Activated B cell treated with CpG ODN at 0.5 μM for 24 hours (primary cell): ENCODE measurements at regions of chr3 and their contacts with region 1.

Region 1: GRCh38 chr3:186985661-186986364 is 55.5 kb downstream of the ST6GAL1 start:
- DNase-seq: no peak
- ATAC-seq: peak; percentile 82
- H3K4me3 Mint-ChIP-seq: peak overlapping the region; percentile 39
- H3K27ac Mint-ChIP-seq: peak overlapping the region; percentile 97
- H3K4me1 Mint-ChIP-seq: peaks cover 91% of the 10 kb centered on the region
- H3K27me3 Mint-ChIP-seq: no peaks in the 10 kb centered on the region
- CTCF ChIP-seq: no peak

Region 2: GRCh38 chr3:186959029-186959624 is 26.7 kb before region 1 on chr3:
- CTCF ChIA-PET with region 1: interaction called, 4 read pairs
- POLR2A ChIA-PET with region 1: interaction called, 10 read pairs
- intact Hi-C with region 1: loop called (anchors 2 kb)
- DNase-seq: no peak
- ATAC-seq: peak; percentile 75
- H3K4me3 Mint-ChIP-seq: peak overlapping the region; percentile 45
- H3K27ac Mint-ChIP-seq: peak overlapping the region; percentile 75
- H3K4me1 Mint-ChIP-seq: peaks cover 82% of the 10 kb centered on the region
- H3K27me3 Mint-ChIP-seq: no peaks in the 10 kb centered on the region
- CTCF ChIP-seq: no peak

Region 3: GRCh38 chr3:186971578-186971977 is 14.2 kb before region 1 on chr3:
- CTCF ChIA-PET with region 1: no interaction called
- POLR2A ChIA-PET with region 1: interaction called, 5 read pairs
- intact Hi-C with region 1: loop called (anchors 2 kb)
- DNase-seq: no peak
- ATAC-seq: no peak
- H3K4me3 Mint-ChIP-seq: no peak overlapping the region
- H3K27ac Mint-ChIP-seq: peak overlapping the region; percentile 41
- H3K4me1 Mint-ChIP-seq: peaks cover 54% of the 10 kb centered on the region
- H3K27me3 Mint-ChIP-seq: no peaks in the 10 kb centered on the region
- CTCF ChIP-seq: no peak

Region 4: GRCh38 chr3:187000711-187001151 is 14.9 kb after region 1 on chr3:
- CTCF ChIA-PET with region 1: no interaction called
- POLR2A ChIA-PET with region 1: interaction called, 15 read pairs
- intact Hi-C with region 1: loop called (anchors 1 kb)
- DNase-seq: peak; percentile 43
- ATAC-seq: peak; percentile 66
- H3K4me3 Mint-ChIP-seq: peak overlapping the region; percentile 72
- H3K27ac Mint-ChIP-seq: peak overlapping the region; percentile 89
- H3K4me1 Mint-ChIP-seq: peaks cover 94% of the 10 kb centered on the region
- H3K27me3 Mint-ChIP-seq: no peaks in the 10 kb centered on the region
- CTCF ChIP-seq: no peak

Region 5: DNA sequence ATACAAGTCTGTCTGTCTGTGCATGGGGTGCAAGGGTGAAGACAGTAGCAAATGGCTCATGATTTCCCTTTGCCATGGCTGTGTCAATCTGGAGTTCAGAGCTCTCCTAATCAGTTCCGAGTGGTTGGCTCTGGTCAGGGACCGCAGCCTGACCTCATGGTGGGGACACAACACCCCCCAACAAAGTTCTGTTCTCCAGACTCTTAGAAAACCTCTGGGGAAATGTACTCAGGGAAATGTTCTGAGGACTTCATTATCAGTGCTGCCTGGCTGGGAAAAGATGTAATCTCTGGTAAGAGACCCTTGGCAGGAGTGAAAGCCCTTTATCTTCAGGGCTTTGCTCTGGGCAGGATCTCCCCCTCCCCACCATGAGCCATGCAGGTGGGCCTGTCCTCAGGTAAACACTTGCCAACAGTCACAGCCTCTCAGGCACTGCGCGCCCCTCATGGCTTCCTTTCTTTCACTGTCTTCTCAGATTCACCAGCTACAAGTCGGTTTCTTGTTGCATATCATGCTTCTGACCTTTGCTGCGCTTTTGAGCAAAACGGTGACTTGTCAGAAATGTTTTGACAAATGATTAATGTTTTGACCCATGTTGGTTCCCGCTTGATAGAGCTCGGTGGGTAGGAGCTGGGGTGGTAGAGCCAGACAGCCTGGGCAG is 40.0 kb after region 1 on chr3:
- CTCF ChIA-PET with region 1: no interaction called
- POLR2A ChIA-PET with region 1: interaction called, 23 read pairs
- intact Hi-C with region 1: loop called (anchors 1 kb)
- DNase-seq: no peak
- ATAC-seq: peak; percentile 51
- H3K4me3 Mint-ChIP-seq: peak overlapping the region; percentile 84
- H3K27ac Mint-ChIP-seq: peak overlapping the region; percentile 93
- H3K4me1 Mint-ChIP-seq: peaks cover 93% of the 10 kb centered on the region
- H3K27me3 Mint-ChIP-seq: no peaks in the 10 kb centered on the region
- CTCF ChIP-seq: no peak